Activated CD8-positive, alpha-beta T cell treated with anti-CD3 and anti-CD28 coated beads for 36 hours (primary cell): ENCODE measurements at regions of chr5 and their contacts with region 1.

Region 1: GRCh38 chr5:180315762-180316212 is 23.9 kb upstream of the MAPK9 start:
- DNase-seq: peak; percentile 78
- ATAC-seq: peak; percentile 97
- H3K4me3 Mint-ChIP-seq: no peak overlapping the region
- H3K27ac Mint-ChIP-seq: no peak overlapping the region
- H3K4me1 Mint-ChIP-seq: no peaks in the 10 kb centered on the region
- H3K27me3 Mint-ChIP-seq: no peaks in the 10 kb centered on the region
- CTCF ChIP-seq: peak; percentile 94

Region 2: DNA sequence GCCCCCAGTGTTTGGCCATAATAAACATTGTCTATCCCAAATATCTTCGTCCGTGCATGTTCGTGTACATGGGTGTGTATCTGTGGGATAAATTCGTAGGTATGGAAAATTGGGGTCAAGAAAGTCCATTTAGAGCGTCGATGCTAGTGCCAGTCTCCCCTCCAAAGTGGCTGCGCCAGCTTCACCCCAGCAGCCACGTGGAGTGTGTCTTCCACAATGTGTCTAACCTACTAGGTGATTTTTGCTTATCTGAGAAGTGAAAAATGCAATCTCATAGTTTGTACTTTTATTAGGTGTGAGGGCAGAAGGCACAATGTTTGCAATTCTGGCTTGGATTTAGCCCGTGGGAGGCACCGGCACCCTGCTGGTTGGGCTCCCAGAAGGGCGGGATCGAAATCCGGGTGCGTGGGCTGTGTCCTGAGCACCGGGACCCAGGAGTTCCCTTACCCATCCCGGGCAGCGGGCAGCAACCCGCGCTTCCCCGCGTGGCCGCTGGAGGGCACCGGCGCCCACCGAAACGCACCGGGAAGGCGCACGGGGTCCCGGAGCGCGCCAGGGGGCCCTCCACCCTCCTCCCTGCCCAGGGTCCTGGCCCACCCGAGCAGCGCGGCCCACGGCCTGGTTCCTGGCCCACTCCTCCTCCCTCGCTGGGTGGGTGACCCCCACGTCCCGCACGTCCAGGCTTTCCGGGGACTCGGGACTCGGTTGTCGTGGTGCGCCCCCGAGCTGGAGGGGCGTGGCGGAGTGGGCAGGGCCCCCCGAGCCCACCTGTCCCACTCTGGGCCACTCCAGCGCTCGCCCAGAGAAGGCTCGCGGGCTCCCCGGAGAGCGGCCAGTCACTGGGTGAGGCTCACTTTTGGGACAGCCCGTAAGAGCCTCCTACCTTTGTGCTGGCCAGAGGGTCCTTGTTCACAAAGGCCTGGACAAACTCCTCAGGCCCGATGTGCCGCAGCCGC is 188.8 kb before region 1 on chr5:
- CTCF ChIA-PET with region 1: interaction called, 16 read pairs
- POLR2A ChIA-PET with region 1: no interaction called
- intact Hi-C with region 1: no loop called
- DNase-seq: peak; percentile 45
- ATAC-seq: peak; percentile 83
- H3K4me3 Mint-ChIP-seq: no peak overlapping the region
- H3K27ac Mint-ChIP-seq: no peak overlapping the region
- H3K4me1 Mint-ChIP-seq: no peaks in the 10 kb centered on the region
- H3K27me3 Mint-ChIP-seq: peaks cover 15% of the 10 kb centered on the region
- CTCF ChIP-seq: peak; percentile 99

Region 3: GRCh38 chr5:180281706-180282105 is 34.1 kb before region 1 on chr5:
- CTCF ChIA-PET with region 1: interaction called, 13 read pairs
- POLR2A ChIA-PET with region 1: no interaction called
- intact Hi-C with region 1: no loop called
- DNase-seq: no peak
- ATAC-seq: no peak
- H3K4me3 Mint-ChIP-seq: no peak overlapping the region
- H3K27ac Mint-ChIP-seq: no peak overlapping the region
- H3K4me1 Mint-ChIP-seq: no peaks in the 10 kb centered on the region
- H3K27me3 Mint-ChIP-seq: no peaks in the 10 kb centered on the region
- CTCF ChIP-seq: no peak

Region 4: DNA sequence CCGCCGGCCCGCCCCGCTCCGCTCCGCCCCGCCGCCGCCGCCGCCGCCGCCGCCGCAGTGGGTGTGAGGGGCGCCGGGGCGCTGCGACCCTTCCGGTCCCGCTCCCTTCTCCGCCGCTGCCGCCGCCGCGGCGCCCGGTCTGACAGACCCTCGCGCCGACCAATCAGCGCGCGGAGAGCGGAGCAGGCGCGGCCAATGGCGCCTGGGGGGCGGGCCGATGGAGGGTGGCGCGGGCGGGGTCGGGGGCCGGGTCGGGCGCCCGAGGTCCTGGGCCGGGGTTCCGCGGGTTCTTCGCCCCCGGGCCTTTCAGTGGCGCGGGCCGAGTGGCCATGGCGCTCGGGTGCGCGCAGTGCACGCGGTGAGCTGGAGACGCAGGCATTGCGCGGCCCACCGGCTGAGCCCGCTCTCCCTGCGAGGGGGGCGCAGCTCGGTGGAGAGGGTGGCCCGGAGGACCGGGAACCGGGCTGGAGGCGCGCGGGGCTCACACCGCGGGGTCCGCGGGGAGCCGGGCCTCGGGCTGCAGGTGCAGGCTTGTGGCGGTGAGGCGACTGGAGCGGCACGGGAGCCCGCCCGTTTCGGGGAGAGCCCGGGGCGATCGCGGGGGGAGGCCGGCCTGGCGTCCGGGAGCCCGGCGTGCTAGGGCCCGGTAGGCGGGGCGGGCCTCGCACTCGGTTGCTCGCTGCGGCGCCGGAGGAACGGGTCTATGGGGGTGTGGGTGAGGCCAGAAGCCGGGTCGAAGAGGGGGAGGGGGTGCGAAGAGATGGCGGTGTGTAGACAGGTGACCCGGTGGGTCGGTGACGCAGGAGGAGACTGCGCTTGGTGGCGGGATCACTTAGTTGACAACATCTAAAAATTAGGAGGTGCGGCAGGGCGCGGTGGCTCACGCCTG is 23.6 kb before region 1 on chr5 and contains the start of gene MAPK9:
- CTCF ChIA-PET with region 1: interaction called, 68 read pairs
- POLR2A ChIA-PET with region 1: interaction called, 3 read pairs
- intact Hi-C with region 1: no loop called
- DNase-seq: peak; percentile 88
- ATAC-seq: peak; percentile 82
- H3K4me3 Mint-ChIP-seq: peak within 1 kb of the TSS; percentile 82
- H3K27ac Mint-ChIP-seq: peak within 1 kb of the TSS; percentile 86
- H3K4me1 Mint-ChIP-seq: peaks cover 37% of the 10 kb centered on the region
- H3K27me3 Mint-ChIP-seq: no peaks in the 10 kb centered on the region
- CTCF ChIP-seq: no peak
- total RNA-seq, gene MAPK9: 31.8 to 33.2 TPM

Region 5: DNA sequence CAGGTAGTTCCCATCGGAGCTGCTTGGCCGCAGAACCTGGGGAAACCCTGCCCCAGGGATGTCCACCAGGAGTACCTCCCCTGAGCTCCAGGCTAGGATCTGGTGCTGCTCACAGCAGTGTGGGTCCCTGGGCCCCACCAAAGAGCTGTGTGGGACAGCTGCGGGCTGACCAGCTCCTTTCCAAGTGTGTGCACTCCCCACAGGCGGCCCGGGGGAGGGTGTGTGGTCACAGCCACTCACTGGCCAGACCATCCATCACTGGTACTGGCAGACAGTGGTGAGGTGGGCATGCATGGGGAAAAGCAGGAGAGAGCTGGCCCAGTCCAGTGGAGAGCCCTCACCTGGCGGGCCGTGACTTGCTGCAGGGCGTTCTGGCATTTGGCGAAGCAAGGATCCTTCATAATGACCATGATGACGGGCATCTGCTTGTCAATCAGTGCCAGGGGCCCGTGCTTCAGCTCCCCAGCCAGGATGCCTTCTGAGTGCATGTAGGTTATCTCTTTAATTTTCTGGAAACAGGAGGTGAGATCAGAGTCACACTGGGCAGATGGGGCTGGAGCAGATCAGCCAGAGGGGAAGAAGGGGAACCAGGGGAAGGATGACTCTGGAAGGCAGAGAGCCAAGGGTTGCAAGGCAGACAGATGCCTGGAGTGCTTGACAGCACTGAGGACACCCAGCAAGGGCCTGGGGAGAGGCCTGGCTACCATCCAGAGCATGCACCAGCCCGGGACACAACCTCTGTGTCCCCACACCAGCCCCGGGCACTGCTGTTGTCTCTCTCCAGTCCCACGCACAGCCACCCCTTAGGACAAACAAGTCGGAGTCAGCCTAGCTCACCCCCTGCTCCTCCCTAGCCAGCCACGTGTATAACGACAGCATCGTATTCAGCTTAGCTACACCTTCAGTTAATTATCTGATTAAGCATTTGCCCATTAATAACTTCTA is 11.1 kb before region 1 on chr5:
- CTCF ChIA-PET with region 1: interaction called, 19 read pairs
- POLR2A ChIA-PET with region 1: no interaction called
- intact Hi-C with region 1: no loop called
- DNase-seq: no peak
- ATAC-seq: no peak
- H3K4me3 Mint-ChIP-seq: no peak overlapping the region
- H3K27ac Mint-ChIP-seq: no peak overlapping the region
- H3K4me1 Mint-ChIP-seq: no peaks in the 10 kb centered on the region
- H3K27me3 Mint-ChIP-seq: peaks cover 4% of the 10 kb centered on the region
- CTCF ChIP-seq: no peak

Region 6: DNA sequence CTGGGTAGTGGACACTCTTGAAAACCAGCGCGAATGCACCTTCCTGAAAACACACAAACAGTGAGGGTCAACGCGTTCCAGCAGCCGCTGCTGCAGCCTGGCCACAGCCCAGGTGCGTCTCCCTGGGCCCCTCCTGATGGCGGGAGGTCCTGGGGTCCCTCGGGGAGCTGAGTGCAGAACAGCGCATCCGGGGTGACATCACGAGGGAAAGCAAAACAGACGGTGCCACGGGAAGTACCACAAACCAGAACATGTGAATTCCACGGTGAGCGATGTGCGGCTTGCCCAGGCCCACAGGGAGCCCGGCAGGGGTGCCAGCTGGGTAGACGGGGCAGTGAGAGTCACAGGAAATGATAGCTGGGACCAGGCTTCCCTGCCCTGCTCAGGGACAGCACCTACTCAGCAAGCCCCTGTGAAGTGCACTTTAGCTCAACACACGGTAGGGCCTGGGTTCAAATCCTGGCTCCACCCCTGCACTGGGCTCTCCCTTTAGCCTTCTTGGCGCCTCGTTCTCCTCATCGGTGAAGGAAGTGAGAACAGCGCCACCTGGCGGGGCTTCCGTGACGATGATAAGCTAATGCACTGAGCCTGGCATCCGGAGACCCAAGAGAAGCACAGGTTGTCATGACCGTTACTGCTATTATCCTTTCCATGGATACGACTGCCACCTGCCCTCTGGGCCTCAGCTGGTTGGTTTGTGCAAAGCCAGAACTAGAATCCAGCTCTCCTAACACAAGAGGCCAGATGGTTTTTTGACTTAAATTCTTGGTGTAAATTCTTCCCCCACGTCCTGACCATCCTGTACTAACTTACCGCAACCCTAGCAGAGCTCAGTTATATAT is 12.7 kb after region 1 on chr5:
- CTCF ChIA-PET with region 1: interaction called, 43 read pairs
- POLR2A ChIA-PET with region 1: interaction called, 3 read pairs
- intact Hi-C with region 1: no loop called
- DNase-seq: peak; percentile 94
- ATAC-seq: peak; percentile 96
- H3K4me3 Mint-ChIP-seq: no peak overlapping the region
- H3K27ac Mint-ChIP-seq: no peak overlapping the region
- H3K4me1 Mint-ChIP-seq: peaks cover 2% of the 10 kb centered on the region
- H3K27me3 Mint-ChIP-seq: peaks cover 9% of the 10 kb centered on the region
- CTCF ChIP-seq: peak; percentile 88

Region 7: DNA sequence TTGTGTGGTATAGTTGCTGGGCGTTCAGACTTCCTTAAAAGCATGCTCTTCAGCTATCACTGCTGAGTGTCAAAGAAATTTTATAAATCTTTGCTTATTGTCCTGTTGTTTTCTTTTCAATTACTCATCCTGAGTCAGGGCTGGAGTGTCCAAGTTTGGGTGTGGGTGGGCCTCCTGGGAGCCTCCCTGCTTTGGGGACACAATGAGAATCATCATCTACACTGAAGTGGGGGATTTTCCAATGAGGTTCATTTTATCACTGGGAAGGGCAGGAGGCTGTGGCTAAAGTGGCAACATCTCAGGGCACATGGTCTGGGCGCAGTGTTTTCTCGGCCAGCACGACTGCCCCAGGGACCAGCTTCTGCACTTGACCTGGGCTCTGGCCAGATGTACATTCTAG is 17.9 kb after region 1 on chr5:
- CTCF ChIA-PET with region 1: interaction called, 43 read pairs
- POLR2A ChIA-PET with region 1: no interaction called
- intact Hi-C with region 1: no loop called
- DNase-seq: no peak
- ATAC-seq: no peak
- H3K4me3 Mint-ChIP-seq: no peak overlapping the region
- H3K27ac Mint-ChIP-seq: no peak overlapping the region
- H3K4me1 Mint-ChIP-seq: peaks cover 2% of the 10 kb centered on the region
- H3K27me3 Mint-ChIP-seq: peaks cover 16% of the 10 kb centered on the region
- CTCF ChIP-seq: no peak